ENCODE measurements at regions of chr3 and their contacts with region 1.

Region 1: DNA sequence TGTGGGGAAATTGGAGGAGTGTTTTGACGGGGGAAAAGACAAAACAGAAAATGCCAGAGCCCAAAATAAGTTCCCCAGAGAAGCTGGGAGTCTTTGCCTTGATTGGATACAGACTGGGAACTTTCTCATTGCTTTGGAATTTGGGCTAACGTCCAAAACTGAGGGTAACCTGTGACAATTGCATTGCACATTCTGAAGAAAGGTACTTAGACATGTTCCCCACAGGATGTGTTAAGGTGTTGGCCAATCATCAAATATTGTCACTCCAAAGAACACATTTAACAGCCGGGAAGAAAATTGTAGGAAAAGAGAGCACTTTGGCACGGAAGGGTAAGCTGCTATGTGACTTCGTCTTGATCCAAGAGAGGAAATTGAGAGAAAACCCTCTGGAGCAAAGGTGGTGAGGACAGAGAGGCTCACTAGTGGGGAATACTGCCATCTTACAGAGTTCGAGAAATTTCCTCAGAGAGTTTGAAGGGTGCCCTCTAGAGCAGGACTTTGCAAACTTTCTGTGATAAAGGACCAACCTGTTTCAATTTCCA is 619.5 kb upstream of the TBL1XR1 start:
- DNase-seq: peak in 1 of 5 donors; percentile 23
- ATAC-seq: peak; percentile 47 to 72 (median 61)
- H3K4me3 ChIP-seq: no peak overlapping the region
- H3K27ac ChIP-seq: peak overlapping the region in 10 of 12 donors; percentile 6 to 63 (median 52)
- H3K4me1 ChIP-seq: peaks cover 5 to 52% (median 28%) of the 10 kb centered on the region in 12 donors
- H3K27me3 ChIP-seq: no peaks in the 10 kb centered on the region
- CTCF ChIP-seq: peak in 6 of 12 donors; percentile 13 to 49 (median 36)
- POLR2A ChIP-seq: no peak

Region 2: GRCh38 chr3:177615015-177615414 is 201.7 kb before region 1 on chr3:
- intact Hi-C with region 1: loop called in 1 of 10 experiments (anchors 5 kb)
- DNase-seq: peak; percentile 65 to 87 (median 80)
- ATAC-seq: peak in 3 of 4 donors; percentile 72 to 93 (median 87)
- H3K4me3 ChIP-seq: no peak overlapping the region
- H3K27ac ChIP-seq: peak overlapping the region in 3 of 12 donors; percentile 16 to 28 (median 23)
- H3K4me1 ChIP-seq: peaks cover 0 to 55% (median 32%) of the 10 kb centered on the region in 12 donors
- H3K27me3 ChIP-seq: no peaks in the 10 kb centered on the region
- CTCF ChIP-seq: no peak
- POLR2A ChIP-seq: no peak

Region 3: GRCh38 chr3:177934001-177934891 is 117.5 kb after region 1 on chr3:
- intact Hi-C with region 1: loop called in 1 of 10 experiments (anchors 5 kb)
- DNase-seq: peak in 2 of 5 donors; percentile 31 to 35
- ATAC-seq: peak in 2 of 4 donors; percentile 26 to 28
- H3K4me3 ChIP-seq: no peak overlapping the region
- H3K27ac ChIP-seq: no peak overlapping the region
- H3K4me1 ChIP-seq: peaks cover 0 to 29% (median 15%) of the 10 kb centered on the region in 12 donors
- H3K27me3 ChIP-seq: no peaks in the 10 kb centered on the region
- CTCF ChIP-seq: no peak
- POLR2A ChIP-seq: no peak

Region 4: DNA sequence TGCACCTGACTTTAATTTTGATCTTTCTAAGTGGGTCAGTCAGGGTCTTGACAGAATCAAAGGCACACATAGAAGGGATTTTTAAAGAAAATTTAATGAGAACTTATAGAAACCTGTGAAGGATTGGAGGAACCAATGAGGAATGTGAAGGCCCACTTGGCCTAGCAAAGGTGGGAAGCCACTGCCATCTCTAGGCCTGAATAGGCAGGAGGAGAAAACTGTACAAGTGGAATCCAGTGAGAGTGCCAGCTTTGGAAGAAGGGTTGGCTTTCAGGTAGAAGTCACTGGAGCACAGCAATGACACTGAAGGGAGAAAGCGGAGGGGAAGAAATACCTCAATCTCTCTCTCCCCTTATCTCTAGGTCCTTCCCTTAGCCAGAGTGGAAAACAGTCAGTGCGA is 338.8 kb after region 1 on chr3:
- intact Hi-C with region 1: loop called in 1 of 10 experiments (anchors 10 kb)
- DNase-seq: no peak
- ATAC-seq: no peak
- H3K4me3 ChIP-seq: no peak overlapping the region
- H3K27ac ChIP-seq: no peak overlapping the region
- H3K4me1 ChIP-seq: peaks cover 0 to 9% (median 0%) of the 10 kb centered on the region in 12 donors
- H3K27me3 ChIP-seq: no peaks in the 10 kb centered on the region
- CTCF ChIP-seq: peak in 4 of 12 donors; percentile 6 to 14 (median 12)
- POLR2A ChIP-seq: no peak